Mucosa of descending colon (tissue), 3 donors: ENCODE measurements at regions of chr2 and their contacts with region 1.

Region 1: GRCh38 chr2:186485871-186486650 is at the start of gene ZC3H15:
- DNase-seq: peak; percentile 96 to 99 (median 98)
- ATAC-seq: peak; percentile 97
- H3K4me3 ChIP-seq: peak within 1 kb of the TSS; percentile 95
- H3K4me1 ChIP-seq: peaks cover 27% of the 10 kb centered on the region
- CTCF ChIP-seq: no peak
- total RNA-seq, gene ZC3H15: 46.5 to 54.6 (median 48.2) TPM

Region 2: GRCh38 chr2:186589612-186590349 is 103.7 kb after region 1 on chr2 and contains the start of gene ITGAV:
- intact Hi-C with region 1: loop called in 1 of 2 experiments (anchors 10 kb)
- DNase-seq: peak; percentile 94 to 96 (median 95)
- ATAC-seq: peak; percentile 98
- H3K4me3 ChIP-seq: peak within 1 kb of the TSS; percentile 81
- H3K4me1 ChIP-seq: peaks cover 17% of the 10 kb centered on the region
- CTCF ChIP-seq: no peak
- total RNA-seq, gene ITGAV: 41.0 to 62.8 (median 47.2) TPM